Mammary epithelial cell (primary cell): ENCODE measurements at regions of chr9 and their contacts with region 1.

Region 1: GRCh38 chr9:131799177-131799823 is 59.4 kb upstream of the RAPGEF1 start:
- DNase-seq: peak; percentile 19
- H3K4me3 ChIP-seq: no peak overlapping the region
- H3K27ac ChIP-seq: no peak overlapping the region
- H3K4me1 ChIP-seq: no peaks in the 10 kb centered on the region
- H3K27me3 ChIP-seq: no peaks in the 10 kb centered on the region
- CTCF ChIP-seq: no peak

Region 2: GRCh38 chr9:131697097-131697496 is 102.2 kb before region 1 on chr9:
- CTCF ChIA-PET with region 1: no interaction called
- dilution Hi-C with region 1: loop called (anchors 5 kb)
- in situ Hi-C with region 1: no loop called
- intact Hi-C with region 1: no loop called
- DNase-seq: no peak
- H3K4me3 ChIP-seq: no peak overlapping the region
- H3K27ac ChIP-seq: no peak overlapping the region
- H3K4me1 ChIP-seq: peaks cover 7% of the 10 kb centered on the region
- H3K27me3 ChIP-seq: no peaks in the 10 kb centered on the region
- CTCF ChIP-seq: no peak

Region 3: DNA sequence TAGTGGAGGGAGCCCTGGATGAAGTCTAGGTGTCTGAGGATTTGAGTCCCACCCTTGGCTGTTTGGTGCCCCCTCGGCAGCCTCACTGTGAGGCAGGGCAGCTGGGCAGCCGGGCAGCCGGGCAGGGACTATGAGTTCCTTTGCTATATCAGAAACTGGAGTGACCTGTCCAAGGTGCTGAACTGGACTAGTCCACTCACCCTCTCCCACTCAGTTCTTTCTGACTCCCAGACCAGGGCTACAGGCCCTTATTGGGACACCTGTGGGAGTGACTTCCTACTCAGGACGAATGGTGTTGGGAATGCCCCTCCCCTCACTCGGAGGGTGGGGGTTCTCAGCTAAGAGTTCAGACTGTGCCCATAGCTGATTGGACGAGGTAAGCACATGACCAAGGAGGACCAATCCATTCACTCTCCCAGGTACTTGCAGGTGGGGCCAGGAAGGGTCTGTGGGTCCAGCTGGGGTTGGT is 25.4 kb before region 1 on chr9:
- CTCF ChIA-PET with region 1: no interaction called
- dilution Hi-C with region 1: no loop called
- in situ Hi-C with region 1: no loop called
- intact Hi-C with region 1: loop called (anchors 1 kb)
- DNase-seq: peak; percentile 47
- H3K4me3 ChIP-seq: no peak overlapping the region
- H3K27ac ChIP-seq: no peak overlapping the region
- H3K4me1 ChIP-seq: no peaks in the 10 kb centered on the region
- H3K27me3 ChIP-seq: no peaks in the 10 kb centered on the region
- CTCF ChIP-seq: no peak

Region 4: DNA sequence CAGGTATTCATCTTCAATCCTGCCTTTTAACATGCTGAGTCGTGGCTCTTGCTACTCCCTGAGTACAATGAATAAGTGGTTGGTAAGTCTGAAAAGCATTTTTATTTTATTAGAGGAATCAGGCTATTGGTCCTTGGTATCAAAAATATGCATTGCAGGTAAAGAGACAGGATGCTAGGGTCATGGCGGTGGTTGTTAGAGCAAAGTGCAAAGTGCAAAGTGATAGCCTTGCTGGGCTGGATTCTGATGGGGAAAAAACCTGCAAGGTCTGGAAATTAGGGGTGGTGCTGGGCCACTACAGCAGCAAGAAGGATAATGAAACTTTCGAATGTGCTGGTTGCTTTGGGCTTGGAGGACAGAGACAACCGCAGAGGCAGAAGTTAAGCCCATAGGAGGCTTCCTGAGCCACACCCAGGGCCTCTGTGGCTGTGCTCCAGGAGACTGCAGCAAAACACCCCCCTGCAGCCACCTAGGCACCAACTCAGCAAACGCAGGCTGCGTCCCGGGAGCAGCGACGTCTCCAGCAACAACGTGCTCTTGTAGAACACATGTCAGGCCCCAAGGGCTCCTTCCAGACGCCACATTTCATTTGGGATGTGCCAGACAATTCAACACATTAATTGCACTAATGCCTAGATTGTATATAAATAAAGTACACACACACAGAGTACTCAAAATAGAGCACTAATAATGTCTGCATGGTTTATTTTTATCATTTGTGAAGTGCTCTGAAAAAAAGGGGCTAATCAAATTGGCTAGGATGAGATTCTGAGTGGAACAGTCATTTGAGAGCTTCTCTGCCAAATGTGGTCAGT is 90.3 kb after region 1 on chr9:
- CTCF ChIA-PET with region 1: no interaction called
- dilution Hi-C with region 1: loop called (anchors 5 kb)
- in situ Hi-C with region 1: no loop called
- intact Hi-C with region 1: no loop called
- DNase-seq: no peak
- H3K4me3 ChIP-seq: no peak overlapping the region
- H3K27ac ChIP-seq: no peak overlapping the region
- H3K4me1 ChIP-seq: no peaks in the 10 kb centered on the region
- H3K27me3 ChIP-seq: no peaks in the 10 kb centered on the region
- CTCF ChIP-seq: no peak

Region 5: DNA sequence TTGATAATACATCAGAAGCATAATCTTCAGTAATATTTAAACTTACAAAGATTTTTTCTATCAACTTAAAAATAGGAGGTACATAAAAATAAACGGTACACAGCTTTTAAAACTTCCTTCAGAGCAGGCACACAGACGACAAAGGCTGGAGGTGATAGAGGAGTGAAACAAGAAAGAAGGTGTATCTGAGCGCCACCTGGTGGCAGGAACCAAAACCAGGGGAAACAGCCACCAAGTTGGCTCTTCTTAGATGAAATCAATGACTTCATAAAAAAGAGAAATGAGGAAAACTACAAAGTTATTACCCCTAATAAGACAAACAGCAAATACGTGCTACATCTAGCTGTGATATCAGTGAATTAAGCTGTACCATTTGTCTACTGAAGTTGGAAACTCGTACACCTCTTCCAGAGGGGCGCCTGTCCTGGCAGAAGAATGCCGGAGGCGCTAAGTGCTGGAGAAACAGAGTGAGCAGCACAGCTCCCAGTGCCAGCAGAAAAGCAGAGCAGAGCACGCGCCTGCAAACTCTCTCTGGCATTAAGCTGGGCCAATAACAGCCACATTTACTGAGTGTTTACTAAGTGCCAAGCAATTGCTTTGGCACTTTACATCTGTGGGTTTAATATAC is 469.5 kb after region 1 on chr9:
- CTCF ChIA-PET with region 1: no interaction called
- dilution Hi-C with region 1: loop called (anchors 25 kb)
- in situ Hi-C with region 1: no loop called
- intact Hi-C with region 1: no loop called
- DNase-seq: no peak
- H3K4me3 ChIP-seq: no peak overlapping the region
- H3K27ac ChIP-seq: no peak overlapping the region
- H3K4me1 ChIP-seq: no peaks in the 10 kb centered on the region
- H3K27me3 ChIP-seq: no peaks in the 10 kb centered on the region
- CTCF ChIP-seq: peak; percentile 51 to 59

Region 6: DNA sequence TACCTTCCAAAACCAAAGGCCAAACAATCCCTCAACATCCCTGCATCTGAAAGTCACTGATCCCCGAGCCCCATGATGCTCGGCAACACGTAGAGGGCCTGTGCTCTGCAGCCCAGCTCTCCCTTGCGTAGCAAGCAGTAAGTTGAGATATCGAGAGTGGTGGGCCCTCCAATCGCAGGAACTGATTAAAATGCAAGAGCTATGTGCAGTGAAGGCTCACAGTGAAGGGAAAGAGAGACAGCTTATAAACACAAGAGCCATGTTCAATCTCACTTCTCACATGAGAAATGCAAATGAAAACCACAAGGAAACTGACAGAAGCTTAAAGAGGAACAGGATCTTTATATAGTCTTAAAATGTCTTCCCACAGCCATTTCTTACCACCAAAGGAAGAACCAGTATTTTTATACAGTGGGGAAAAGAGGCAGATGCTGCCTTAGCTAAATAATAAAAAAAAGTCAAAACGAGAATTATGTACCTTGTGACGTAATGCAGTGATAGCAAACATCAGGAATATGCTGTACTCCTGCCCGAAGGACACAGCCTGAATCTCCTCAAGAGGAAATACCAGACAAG is 582.8 kb after region 1 on chr9:
- CTCF ChIA-PET with region 1: no interaction called
- dilution Hi-C with region 1: loop called (anchors 5 kb)
- in situ Hi-C with region 1: no loop called
- intact Hi-C with region 1: no loop called
- DNase-seq: no peak
- H3K4me3 ChIP-seq: no peak overlapping the region
- H3K27ac ChIP-seq: no peak overlapping the region
- H3K4me1 ChIP-seq: no peaks in the 10 kb centered on the region
- H3K27me3 ChIP-seq: no peaks in the 10 kb centered on the region
- CTCF ChIP-seq: no peak

Region 7: DNA sequence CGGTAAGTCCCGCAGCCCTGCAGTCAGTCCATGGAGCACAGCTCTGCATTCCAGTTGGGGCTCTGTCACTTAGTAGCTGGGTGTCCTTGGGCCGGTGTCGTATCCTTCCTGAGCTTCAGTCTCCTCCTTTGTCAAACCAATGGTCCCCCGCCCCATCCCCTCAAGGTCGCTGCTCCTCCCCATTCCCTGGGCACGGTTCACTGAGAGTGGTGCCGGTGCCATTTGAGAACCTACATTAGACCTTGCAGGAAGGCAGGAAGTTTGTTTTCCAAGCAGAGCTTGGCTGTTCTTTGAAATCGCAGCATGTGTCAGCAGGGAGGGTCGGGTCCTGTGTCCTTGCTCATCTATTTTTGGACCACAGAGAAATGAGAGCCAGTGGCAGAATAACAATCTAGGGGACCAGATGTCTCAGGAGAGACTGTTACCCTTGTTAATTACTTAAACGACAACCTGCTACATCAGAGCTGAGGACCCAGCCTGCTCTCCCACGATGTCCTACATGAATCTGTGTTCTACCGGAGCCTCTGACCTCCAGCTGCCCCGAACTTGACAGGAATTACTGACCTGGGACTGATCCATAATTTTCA is 761.4 kb after region 1 on chr9:
- CTCF ChIA-PET with region 1: no interaction called
- dilution Hi-C with region 1: loop called (anchors 10 kb)
- in situ Hi-C with region 1: no loop called
- intact Hi-C with region 1: no loop called
- DNase-seq: no peak
- H3K4me3 ChIP-seq: no peak overlapping the region
- H3K27ac ChIP-seq: no peak overlapping the region
- H3K4me1 ChIP-seq: no peaks in the 10 kb centered on the region
- H3K27me3 ChIP-seq: peaks cover 4% of the 10 kb centered on the region
- CTCF ChIP-seq: no peak